ENCODE measurements at regions of chr6 and their contacts with region 1.

Region 1: DNA sequence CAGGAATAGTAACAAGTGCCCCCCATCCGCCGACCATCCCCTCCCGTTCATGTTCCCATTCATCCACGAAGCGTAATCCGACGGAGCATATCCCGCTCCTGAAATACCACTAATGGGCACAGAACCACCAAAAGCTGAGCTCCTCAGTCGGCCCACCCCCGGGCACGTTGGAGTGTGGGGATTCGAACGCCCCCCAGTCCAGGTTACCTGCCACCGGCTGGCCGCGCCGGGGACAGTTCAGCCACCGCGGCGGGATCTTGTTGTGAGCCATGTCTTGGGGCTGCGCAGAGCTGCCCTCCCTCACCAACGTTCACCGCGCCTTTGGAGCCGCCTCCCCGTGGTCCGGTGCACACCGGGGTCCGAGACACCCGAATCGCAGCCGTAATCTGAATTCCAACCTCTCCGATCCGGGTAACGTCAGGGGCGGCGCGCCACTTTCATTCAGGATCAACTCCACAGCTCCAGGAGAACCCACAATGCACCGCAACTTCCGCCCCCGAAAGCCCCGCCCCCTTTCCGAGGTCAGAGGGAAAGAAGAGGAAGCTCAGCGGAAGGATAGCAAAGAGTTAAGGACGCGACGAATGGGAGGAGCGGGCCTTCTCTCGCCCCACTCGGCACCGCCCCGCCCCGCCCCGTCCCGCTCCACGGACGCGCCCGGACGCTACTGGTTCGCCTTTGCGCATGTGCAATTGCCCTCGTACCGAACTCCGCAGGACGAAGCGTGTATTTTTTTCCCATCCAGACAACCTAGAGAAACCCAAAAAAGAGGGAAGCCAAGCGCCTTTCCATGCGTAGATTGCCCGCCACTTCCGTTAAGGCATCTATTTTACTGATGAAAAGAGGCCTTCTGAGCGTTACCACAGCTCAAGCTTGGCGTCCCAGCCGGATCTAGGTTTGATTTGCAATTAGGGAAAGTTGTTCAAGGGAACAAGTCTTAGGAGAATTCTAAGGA is at the start of gene RNGTT:
- DNase-seq: peak; percentile 97 to 98 (median 98)
- H3K4me3 ChIP-seq: peak within 1 kb of the TSS; percentile 52 to 93 (median 83)
- H3K4me3 Mint-ChIP-seq: peak within 1 kb of the TSS; percentile 97 to 99
- H3K27ac ChIP-seq: peak within 1 kb of the TSS; percentile 78 to 92
- H3K27ac Mint-ChIP-seq: peak within 1 kb of the TSS; percentile 94 to 98 (median 97)
- H3K4me1 ChIP-seq: peaks cover 15 to 19% of the 10 kb centered on the region in 2 donors
- H3K4me1 Mint-ChIP-seq: peaks cover 15% of the 10 kb centered on the region
- H3K27me3 ChIP-seq: no peaks in the 10 kb centered on the region
- H3K27me3 Mint-ChIP-seq: peaks cover 0 to 4% (median 0%) of the 10 kb centered on the region in 3 donors
- CTCF ChIP-seq: no peak
- polyA plus RNA-seq, gene RNGTT: 2.3 to 8.6 (median 5.8) TPM

Region 2: DNA sequence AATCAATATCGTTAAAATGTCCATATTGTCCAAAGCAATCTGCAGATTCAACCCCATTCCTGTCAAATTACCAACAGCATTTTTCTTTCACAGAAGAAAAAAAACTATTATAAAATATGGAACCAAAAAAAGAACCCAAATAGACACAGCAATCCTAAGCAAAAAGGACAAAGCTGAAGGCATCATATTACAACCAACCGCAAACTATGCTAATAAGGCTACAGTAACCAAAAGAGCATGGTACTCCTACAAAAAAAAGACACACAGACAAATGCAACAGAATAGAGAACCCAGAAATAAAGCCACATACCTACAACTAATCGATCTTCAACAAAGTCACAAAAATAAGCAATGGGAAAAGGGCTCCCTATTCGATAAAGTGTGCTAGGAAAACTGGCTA is 49.2 kb before region 1 on chr6:
- intact Hi-C with region 1: loop called in 1 of 2 experiments (anchors 2 kb)
- DNase-seq: no peak
- H3K4me3 ChIP-seq: no peak overlapping the region
- H3K4me3 Mint-ChIP-seq: no peak overlapping the region
- H3K27ac ChIP-seq: no peak overlapping the region
- H3K27ac Mint-ChIP-seq: no peak overlapping the region
- H3K4me1 ChIP-seq: peaks cover 3 to 4% of the 10 kb centered on the region in 2 donors
- H3K4me1 Mint-ChIP-seq: peaks cover 12% of the 10 kb centered on the region
- H3K27me3 ChIP-seq: no peaks in the 10 kb centered on the region
- H3K27me3 Mint-ChIP-seq: no peaks in the 10 kb centered on the region
- CTCF ChIP-seq: no peak

Region 3: GRCh38 chr6:89638320-89639195 is 675.1 kb after region 1 on chr6 and contains the start of gene LYRM2:
- intact Hi-C with region 1: loop called in 1 of 2 experiments (anchors 10 kb)
- DNase-seq: peak; percentile 91 to 93 (median 92)
- H3K4me3 ChIP-seq: peak within 1 kb of the TSS; percentile 57 to 91 (median 84)
- H3K4me3 Mint-ChIP-seq: peak within 1 kb of the TSS; percentile 92 to 94
- H3K27ac ChIP-seq: peak within 1 kb of the TSS; percentile 78 to 98
- H3K27ac Mint-ChIP-seq: peak within 1 kb of the TSS; percentile 96 to 98 (median 98)
- H3K4me1 ChIP-seq: peaks cover 14 to 16% of the 10 kb centered on the region in 2 donors
- H3K4me1 Mint-ChIP-seq: peaks cover 21% of the 10 kb centered on the region
- H3K27me3 ChIP-seq: no peaks in the 10 kb centered on the region
- H3K27me3 Mint-ChIP-seq: no peaks in the 10 kb centered on the region
- CTCF ChIP-seq: no peak
- polyA plus RNA-seq, gene LYRM2: 13.2 to 64.0 (median 58.1) TPM

Region 4: DNA sequence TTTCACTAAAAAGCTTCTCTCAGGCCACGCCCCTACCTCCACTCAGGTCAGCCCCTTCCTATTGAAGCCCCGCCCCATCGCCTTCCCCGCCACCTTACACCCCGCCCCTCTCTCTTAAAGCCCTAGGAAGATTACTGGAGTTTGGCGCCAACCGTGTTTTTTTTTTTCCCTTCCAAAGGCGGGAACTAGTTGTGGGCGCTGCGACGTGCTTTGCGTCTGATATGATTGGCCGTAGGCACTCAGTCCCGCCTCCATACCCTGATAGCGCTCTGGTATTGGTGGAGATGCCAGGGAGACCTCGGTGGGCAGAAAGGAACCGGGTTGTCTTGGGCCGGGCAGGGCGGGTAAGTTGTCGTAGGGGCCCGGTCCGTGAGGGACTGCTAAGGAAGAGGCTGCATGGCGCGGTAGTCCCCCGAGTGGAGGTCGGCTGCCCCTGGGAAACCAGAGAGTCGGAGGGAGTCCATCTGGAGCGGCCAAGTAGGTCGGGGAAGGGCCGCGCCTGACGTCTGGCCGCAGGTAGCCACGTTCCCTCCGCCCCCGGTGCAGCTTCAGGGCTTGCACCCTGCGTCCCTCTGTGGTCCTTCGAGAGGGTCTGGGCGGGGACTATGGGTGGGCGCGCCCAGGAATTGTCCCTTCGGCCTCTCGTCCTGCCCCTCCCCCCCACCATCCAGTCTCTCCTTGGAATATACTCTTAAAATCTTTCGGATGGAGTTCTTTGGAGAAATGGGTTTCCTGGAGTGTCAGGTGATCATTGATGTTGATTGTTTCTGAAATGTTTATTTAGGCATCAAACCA is 866.4 kb after region 1 on chr6 and contains the start of gene CASP8AP2:
- intact Hi-C with region 1: loop called in 1 of 2 experiments (anchors 10 kb)
- DNase-seq: peak; percentile 95 to 98 (median 97)
- H3K4me3 ChIP-seq: peak within 1 kb of the TSS; percentile 90 to 100 (median 94)
- H3K4me3 Mint-ChIP-seq: peak within 1 kb of the TSS; percentile 96 to 98
- H3K27ac ChIP-seq: peak within 1 kb of the TSS; percentile 76 to 94
- H3K27ac Mint-ChIP-seq: peak within 1 kb of the TSS; percentile 89 to 97 (median 96)
- H3K4me1 ChIP-seq: peaks cover 13 to 18% of the 10 kb centered on the region in 2 donors
- H3K4me1 Mint-ChIP-seq: peaks cover 10% of the 10 kb centered on the region
- H3K27me3 ChIP-seq: no peaks in the 10 kb centered on the region
- H3K27me3 Mint-ChIP-seq: no peaks in the 10 kb centered on the region
- CTCF ChIP-seq: no peak
- polyA plus RNA-seq, gene CASP8AP2: 3.5 to 10.5 (median 7.4) TPM

Measured in CD14-positive monocyte (primary cell).